Caco-2 (cell line): ENCODE measurements at regions of chr15 and their contacts with region 1.

Region 1: DNA sequence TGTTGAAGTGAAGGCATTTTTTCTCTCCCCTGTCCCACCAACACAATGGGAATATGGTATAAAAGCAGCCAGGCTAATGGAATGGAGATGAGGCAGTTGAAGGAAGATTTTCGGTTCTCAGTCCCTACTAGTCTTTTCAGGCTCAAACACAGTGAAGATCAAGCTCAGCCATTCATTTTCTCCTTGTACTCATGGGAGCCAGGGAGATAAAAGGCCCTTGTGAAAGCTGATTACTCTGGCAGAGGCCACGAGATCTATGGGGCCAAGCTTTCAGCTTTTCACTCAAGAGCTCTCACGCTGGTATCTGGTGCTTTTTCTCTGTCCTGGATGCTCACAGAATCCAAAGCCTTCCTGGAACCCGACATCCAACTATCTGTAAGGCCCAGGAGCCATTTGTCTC is 14.5 kb upstream of the FAN1 start:
- DNase-seq: no peak
- H3K4me3 ChIP-seq: no peak overlapping the region
- H3K4me3 Mint-ChIP-seq: no peak overlapping the region
- H3K27ac Mint-ChIP-seq: no peak overlapping the region
- H3K4me1 ChIP-seq: no peaks in the 10 kb centered on the region
- H3K4me1 Mint-ChIP-seq: no peaks in the 10 kb centered on the region
- H3K27me3 ChIP-seq: no peaks in the 10 kb centered on the region
- H3K27me3 Mint-ChIP-seq: peaks cover 4% of the 10 kb centered on the region
- CTCF ChIP-seq: no peak

Region 2: GRCh38 chr15:30791239-30792175 is 97.7 kb before region 1 on chr15:
- CTCF ChIA-PET with region 1: no interaction called
- POLR2A ChIA-PET with region 1: interaction called, 10 read pairs
- intact Hi-C with region 1: no loop called
- DNase-seq: peak; percentile 62 to 75
- H3K4me3 ChIP-seq: no peak overlapping the region
- H3K4me3 Mint-ChIP-seq: no peak overlapping the region
- H3K27ac Mint-ChIP-seq: no peak overlapping the region
- H3K4me1 ChIP-seq: no peaks in the 10 kb centered on the region
- H3K4me1 Mint-ChIP-seq: peaks cover 17% of the 10 kb centered on the region
- H3K27me3 ChIP-seq: no peaks in the 10 kb centered on the region
- H3K27me3 Mint-ChIP-seq: peaks cover 3% of the 10 kb centered on the region
- CTCF ChIP-seq: no peak

Region 3: GRCh38 chr15:30922480-30923311 is 33.5 kb after region 1 on chr15:
- CTCF ChIA-PET with region 1: no interaction called
- POLR2A ChIA-PET with region 1: no interaction called
- intact Hi-C with region 1: no loop called
- DNase-seq: no peak
- H3K4me3 ChIP-seq: no peak overlapping the region
- H3K4me3 Mint-ChIP-seq: no peak overlapping the region
- H3K27ac Mint-ChIP-seq: no peak overlapping the region
- H3K4me1 ChIP-seq: no peaks in the 10 kb centered on the region
- H3K4me1 Mint-ChIP-seq: no peaks in the 10 kb centered on the region
- H3K27me3 ChIP-seq: no peaks in the 10 kb centered on the region
- H3K27me3 Mint-ChIP-seq: no peaks in the 10 kb centered on the region
- CTCF ChIP-seq: no peak

Region 4: GRCh38 chr15:30962079-30962478 is 72.9 kb after region 1 on chr15:
- CTCF ChIA-PET with region 1: no interaction called
- POLR2A ChIA-PET with region 1: no interaction called
- intact Hi-C with region 1: no loop called
- DNase-seq: no peak
- H3K4me3 ChIP-seq: no peak overlapping the region
- H3K4me3 Mint-ChIP-seq: no peak overlapping the region
- H3K27ac Mint-ChIP-seq: no peak overlapping the region
- H3K4me1 ChIP-seq: no peaks in the 10 kb centered on the region
- H3K4me1 Mint-ChIP-seq: no peaks in the 10 kb centered on the region
- H3K27me3 ChIP-seq: no peaks in the 10 kb centered on the region
- H3K27me3 Mint-ChIP-seq: no peaks in the 10 kb centered on the region
- CTCF ChIP-seq: no peak

Region 5: DNA sequence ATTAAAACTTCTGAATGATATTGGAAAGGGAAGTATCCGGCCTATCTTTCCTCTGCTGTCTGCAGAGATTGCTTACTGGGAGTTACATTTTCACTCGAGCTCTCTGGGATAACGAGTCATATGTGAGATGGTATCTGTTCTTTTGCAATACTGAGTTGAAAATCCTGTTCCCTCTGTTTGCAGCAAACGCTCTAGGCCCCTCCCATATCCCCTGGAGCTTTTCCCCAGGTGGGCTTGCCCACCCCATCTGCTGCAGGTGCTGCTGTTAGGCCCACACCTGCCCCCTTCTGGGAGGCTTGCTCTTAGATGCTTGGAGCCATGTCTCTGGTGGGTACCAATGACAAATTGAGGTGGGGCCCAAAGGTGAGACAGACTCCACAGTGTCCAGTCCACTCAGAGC is 145.0 kb after region 1 on chr15:
- CTCF ChIA-PET with region 1: no interaction called
- POLR2A ChIA-PET with region 1: no interaction called
- intact Hi-C with region 1: loop called (anchors 1 kb)
- DNase-seq: peak; percentile 83 to 86
- H3K4me3 ChIP-seq: no peak overlapping the region
- H3K4me3 Mint-ChIP-seq: no peak overlapping the region
- H3K27ac Mint-ChIP-seq: peak overlapping the region; percentile 29
- H3K4me1 ChIP-seq: peaks cover 18% of the 10 kb centered on the region
- H3K4me1 Mint-ChIP-seq: peaks cover 21% of the 10 kb centered on the region
- H3K27me3 ChIP-seq: no peaks in the 10 kb centered on the region
- H3K27me3 Mint-ChIP-seq: no peaks in the 10 kb centered on the region
- CTCF ChIP-seq: peak; percentile 39 to 43